MCF 10A (cell line): ENCODE measurements at regions of chr16 and their contacts with region 1.

Region 1: GRCh38 chr16:53773150-53773846 is 69.3 kb downstream of the FTO start:
- DNase-seq: peak; percentile 81
- H3K4me3 Mint-ChIP-seq: no peak overlapping the region
- H3K27ac Mint-ChIP-seq: no peak overlapping the region
- H3K4me1 Mint-ChIP-seq: peaks cover 43% of the 10 kb centered on the region
- H3K27me3 Mint-ChIP-seq: no peaks in the 10 kb centered on the region
- CTCF ChIP-seq: peak; percentile 60

Region 2: DNA sequence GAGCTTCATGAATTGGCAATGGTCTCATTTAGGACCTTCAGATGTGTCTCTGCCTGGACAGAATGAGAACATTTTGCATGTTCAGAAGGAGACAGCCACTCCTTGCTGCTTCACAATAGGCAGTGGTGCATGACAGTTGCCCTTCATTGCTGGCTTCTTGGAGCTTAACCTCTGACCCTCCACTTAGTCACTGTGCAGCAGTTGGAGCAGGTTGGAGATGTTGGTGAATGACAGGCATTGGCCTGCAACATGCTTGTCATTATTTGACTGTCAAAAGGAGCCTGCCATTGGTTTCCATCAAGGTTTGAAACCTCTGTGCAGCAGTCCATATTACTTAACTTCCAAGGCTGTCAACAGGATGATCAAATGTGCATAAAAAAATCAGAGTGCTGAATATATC is 46.7 kb before region 1 on chr16:
- CTCF ChIA-PET with region 1: no interaction called
- POLR2A ChIA-PET with region 1: no interaction called
- intact Hi-C with region 1: no loop called
- DNase-seq: peak; percentile 37
- H3K4me3 Mint-ChIP-seq: no peak overlapping the region
- H3K27ac Mint-ChIP-seq: no peak overlapping the region
- H3K4me1 Mint-ChIP-seq: peaks cover 10% of the 10 kb centered on the region
- H3K27me3 Mint-ChIP-seq: no peaks in the 10 kb centered on the region
- CTCF ChIP-seq: no peak

Region 3: DNA sequence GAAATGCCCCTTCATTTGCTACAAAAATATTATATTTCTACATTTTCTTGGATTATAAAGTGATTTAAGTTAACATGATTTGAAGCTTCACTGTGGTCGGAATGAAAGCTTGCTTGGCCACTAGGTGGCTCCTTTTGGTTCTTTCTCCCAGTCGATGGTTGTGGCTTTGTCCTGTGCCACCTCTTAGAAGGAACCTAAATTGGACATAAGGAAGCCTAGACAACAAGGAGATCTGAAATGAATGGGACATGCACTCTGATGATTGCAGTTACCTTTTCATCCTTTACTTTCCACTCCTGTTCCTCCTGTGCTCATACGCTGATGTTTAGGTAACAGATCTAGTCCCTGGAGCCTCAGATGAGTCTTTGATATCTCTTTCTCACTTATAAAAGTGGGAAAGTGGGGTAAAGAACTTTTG is 30.1 kb before region 1 on chr16:
- CTCF ChIA-PET with region 1: interaction called, 12 read pairs
- POLR2A ChIA-PET with region 1: interaction called, 29 read pairs
- intact Hi-C with region 1: no loop called
- DNase-seq: peak; percentile 66
- H3K4me3 Mint-ChIP-seq: no peak overlapping the region
- H3K27ac Mint-ChIP-seq: peak overlapping the region; percentile 33
- H3K4me1 Mint-ChIP-seq: peaks cover 36% of the 10 kb centered on the region
- H3K27me3 Mint-ChIP-seq: no peaks in the 10 kb centered on the region
- CTCF ChIP-seq: peak; percentile 55

Region 4: GRCh38 chr16:53865494-53865863 is 92.2 kb after region 1 on chr16:
- CTCF ChIA-PET with region 1: interaction called, 5 read pairs
- POLR2A ChIA-PET with region 1: interaction called, 10 read pairs
- intact Hi-C with region 1: no loop called
- DNase-seq: peak; percentile 79
- H3K4me3 Mint-ChIP-seq: peak overlapping the region; percentile 0
- H3K27ac Mint-ChIP-seq: peak overlapping the region; percentile 77
- H3K4me1 Mint-ChIP-seq: peaks cover 36% of the 10 kb centered on the region
- H3K27me3 Mint-ChIP-seq: no peaks in the 10 kb centered on the region
- CTCF ChIP-seq: no peak

Region 5: DNA sequence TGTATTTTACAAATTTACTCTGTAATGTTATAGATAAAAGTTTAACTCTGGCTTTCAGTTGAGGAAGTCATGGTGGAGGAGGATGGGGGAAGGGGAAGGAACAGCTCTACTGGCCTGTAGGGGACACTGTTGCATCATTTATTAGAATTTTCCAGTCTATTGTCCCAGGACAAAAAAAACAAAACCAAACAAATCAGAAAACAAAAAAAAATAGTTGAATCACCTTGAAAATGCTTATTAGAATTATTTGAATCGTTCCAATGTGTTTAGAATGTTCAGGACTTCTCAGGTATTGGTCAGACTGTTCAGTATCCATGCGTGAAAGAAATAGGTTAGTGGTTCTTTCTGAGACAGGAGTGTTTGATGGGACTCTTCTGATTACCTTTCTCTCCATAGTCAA is 172.7 kb after region 1 on chr16:
- CTCF ChIA-PET with region 1: interaction called, 11 read pairs
- POLR2A ChIA-PET with region 1: interaction called, 3 read pairs
- intact Hi-C with region 1: loop called (anchors 10 kb)
- DNase-seq: peak; percentile 53
- H3K4me3 Mint-ChIP-seq: no peak overlapping the region
- H3K27ac Mint-ChIP-seq: peak overlapping the region; percentile 63
- H3K4me1 Mint-ChIP-seq: peaks cover 6% of the 10 kb centered on the region
- H3K27me3 Mint-ChIP-seq: no peaks in the 10 kb centered on the region
- CTCF ChIP-seq: peak; percentile 54

Region 6: GRCh38 chr16:54006693-54007092 is 233.4 kb after region 1 on chr16:
- CTCF ChIA-PET with region 1: no interaction called
- POLR2A ChIA-PET with region 1: no interaction called
- intact Hi-C with region 1: no loop called
- DNase-seq: no peak
- H3K4me3 Mint-ChIP-seq: no peak overlapping the region
- H3K27ac Mint-ChIP-seq: no peak overlapping the region
- H3K4me1 Mint-ChIP-seq: no peaks in the 10 kb centered on the region
- H3K27me3 Mint-ChIP-seq: no peaks in the 10 kb centered on the region
- CTCF ChIP-seq: no peak

Region 7: DNA sequence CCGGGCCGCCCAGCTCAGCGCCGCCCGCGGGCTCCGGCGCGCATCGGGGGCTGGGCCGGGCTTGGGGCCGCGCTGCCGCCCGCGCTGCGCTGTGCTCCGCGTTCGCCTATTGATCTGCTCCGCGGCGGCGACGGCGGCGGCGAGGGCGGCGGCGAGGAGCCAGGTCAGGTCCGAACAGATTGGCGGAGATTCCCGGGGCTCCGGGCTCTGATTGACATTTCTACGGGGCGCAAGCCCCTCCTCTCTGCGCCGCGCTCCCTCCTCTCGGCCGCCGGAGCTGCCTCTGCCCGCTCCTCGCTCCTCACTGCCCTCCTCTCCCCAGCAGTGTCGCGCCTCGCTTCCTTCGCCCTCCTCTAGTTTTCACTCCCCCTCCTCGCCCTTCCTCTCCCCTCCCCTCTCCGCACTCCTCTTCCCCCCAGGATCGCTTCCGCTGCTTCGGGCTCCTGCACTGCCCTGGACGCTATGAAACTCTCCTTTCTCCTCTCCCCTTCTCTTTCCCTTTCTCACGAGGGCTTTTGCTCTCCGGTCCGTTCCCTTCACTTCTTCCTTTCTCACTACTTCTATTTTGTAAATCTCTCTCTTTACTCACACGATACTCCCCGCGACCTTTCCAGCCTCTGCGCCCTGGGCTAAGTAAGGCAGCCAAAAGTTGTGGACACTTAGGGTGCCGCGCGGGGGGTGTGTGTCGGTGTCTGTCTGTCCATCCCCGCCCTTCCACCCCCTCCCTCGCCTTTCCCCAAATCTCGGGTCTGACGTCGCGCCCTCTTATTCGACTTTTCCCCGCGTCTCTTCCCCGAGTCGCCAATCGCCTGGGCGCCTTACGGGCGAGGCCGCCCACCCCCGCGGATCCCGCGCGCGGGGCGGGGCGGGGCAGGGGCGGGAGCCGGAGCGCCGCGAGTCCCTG is 513.0 kb after region 1 on chr16 and contains the start of gene IRX3:
- CTCF ChIA-PET with region 1: interaction called, 5 read pairs
- POLR2A ChIA-PET with region 1: interaction called, 22 read pairs
- intact Hi-C with region 1: loop called (anchors 1 kb)
- DNase-seq: peak; percentile 97
- H3K4me3 Mint-ChIP-seq: peak within 1 kb of the TSS; percentile 94
- H3K27ac Mint-ChIP-seq: peak within 1 kb of the TSS; percentile 95
- H3K4me1 Mint-ChIP-seq: peaks cover 4% of the 10 kb centered on the region
- H3K27me3 Mint-ChIP-seq: no peaks in the 10 kb centered on the region
- CTCF ChIP-seq: no peak
- total RNA-seq, gene IRX3: 15.7 and 17.6 TPM in 2 replicates

Region 8: GRCh38 chr16:54647725-54648221 is 874.5 kb after region 1 on chr16:
- CTCF ChIA-PET with region 1: no interaction called
- POLR2A ChIA-PET with region 1: interaction called, 21 read pairs
- intact Hi-C with region 1: loop called (anchors 5 kb)
- DNase-seq: peak; percentile 91
- H3K4me3 Mint-ChIP-seq: peak overlapping the region; percentile 67
- H3K27ac Mint-ChIP-seq: peak overlapping the region; percentile 94
- H3K4me1 Mint-ChIP-seq: peaks cover 42% of the 10 kb centered on the region
- H3K27me3 Mint-ChIP-seq: no peaks in the 10 kb centered on the region
- CTCF ChIP-seq: no peak

Region 9: DNA sequence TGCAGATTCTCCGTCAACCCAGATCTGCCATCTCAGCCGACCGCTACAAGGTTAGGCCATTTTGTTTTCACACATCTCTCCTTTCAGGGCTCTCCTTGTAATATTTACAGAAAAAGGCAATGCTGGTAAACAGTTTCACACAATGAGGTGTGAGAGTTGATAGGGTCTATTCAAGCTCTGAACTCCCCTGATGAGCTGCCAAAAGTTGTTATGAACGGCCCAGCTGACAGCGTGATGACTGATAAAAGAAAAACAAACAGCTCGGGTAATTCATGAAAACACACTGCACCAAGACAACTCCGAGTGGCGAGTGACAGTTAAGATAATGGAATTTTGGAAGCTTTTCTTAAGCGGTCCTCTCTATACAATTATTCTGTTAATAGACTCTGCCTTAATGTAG is 1089.2 kb after region 1 on chr16:
- CTCF ChIA-PET with region 1: no interaction called
- POLR2A ChIA-PET with region 1: no interaction called
- intact Hi-C with region 1: no loop called
- DNase-seq: no peak
- H3K4me3 Mint-ChIP-seq: no peak overlapping the region
- H3K27ac Mint-ChIP-seq: no peak overlapping the region
- H3K4me1 Mint-ChIP-seq: no peaks in the 10 kb centered on the region
- H3K27me3 Mint-ChIP-seq: no peaks in the 10 kb centered on the region
- CTCF ChIP-seq: no peak